ENCODE measurements at regions of chr1 and their contacts with region 1.

Region 1: GRCh38 chr1:198175423-198176170 is 18.8 kb downstream of the NEK7 start:
- DNase-seq: no peak
- ATAC-seq: peak; percentile 74
- H3K4me3 Mint-ChIP-seq: peak overlapping the region; percentile 53
- H3K27ac Mint-ChIP-seq: peak overlapping the region; percentile 74
- H3K4me1 Mint-ChIP-seq: peaks cover 83% of the 10 kb centered on the region
- H3K27me3 Mint-ChIP-seq: no peaks in the 10 kb centered on the region
- CTCF ChIP-seq: no peak

Region 2: DNA sequence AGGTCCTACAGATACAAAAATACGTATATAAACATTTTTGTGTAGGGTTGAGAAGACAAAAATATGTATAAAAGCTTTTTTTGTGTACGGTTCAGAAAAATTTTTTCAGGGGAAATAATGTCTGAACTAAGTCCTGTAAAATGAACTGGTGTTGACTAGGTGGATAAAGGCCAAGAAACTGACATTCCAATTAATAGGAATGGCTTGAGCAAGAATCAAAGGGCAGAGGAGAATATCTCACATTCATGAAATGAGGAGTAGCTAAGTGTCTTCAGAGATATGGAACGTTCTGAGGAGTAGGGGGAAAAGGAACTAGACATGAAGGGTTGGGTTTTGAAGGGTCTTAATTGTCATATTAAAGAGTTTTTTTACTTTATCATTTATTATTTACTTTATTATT is 631.5 kb before region 1 on chr1:
- CTCF ChIA-PET with region 1: no interaction called
- POLR2A ChIA-PET with region 1: no interaction called
- intact Hi-C with region 1: no loop called
- DNase-seq: no peak
- ATAC-seq: no peak
- H3K4me3 Mint-ChIP-seq: no peak overlapping the region
- H3K27ac Mint-ChIP-seq: no peak overlapping the region
- H3K4me1 Mint-ChIP-seq: no peaks in the 10 kb centered on the region
- H3K27me3 Mint-ChIP-seq: no peaks in the 10 kb centered on the region
- CTCF ChIP-seq: no peak

Region 3: DNA sequence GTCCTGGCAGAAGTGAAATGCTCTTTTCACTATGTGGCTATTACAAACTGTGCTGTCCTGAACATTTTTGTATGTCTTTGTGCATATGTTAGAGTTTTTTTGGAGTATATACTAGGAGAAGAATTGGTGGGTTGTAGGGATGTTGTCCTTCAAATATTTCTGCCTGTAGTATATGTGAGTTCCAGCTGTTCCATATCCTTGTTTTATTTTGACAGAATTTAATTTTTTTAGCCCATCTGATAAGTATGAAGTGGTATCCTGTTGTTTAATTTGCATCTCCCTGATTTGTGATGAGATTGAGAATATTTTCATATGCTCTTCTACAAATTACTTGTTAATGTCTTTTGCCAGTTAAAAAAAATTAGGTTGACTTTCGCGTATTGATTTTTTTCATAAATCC is 15.5 kb after region 1 on chr1:
- CTCF ChIA-PET with region 1: no interaction called
- POLR2A ChIA-PET with region 1: no interaction called
- intact Hi-C with region 1: loop called (anchors 2 kb)
- DNase-seq: no peak
- ATAC-seq: no peak
- H3K4me3 Mint-ChIP-seq: no peak overlapping the region
- H3K27ac Mint-ChIP-seq: no peak overlapping the region
- H3K4me1 Mint-ChIP-seq: peaks cover 61% of the 10 kb centered on the region
- H3K27me3 Mint-ChIP-seq: no peaks in the 10 kb centered on the region
- CTCF ChIP-seq: no peak

Measured in activated B cell treated with CpG ODN at 0.5 μM for 24 hours (primary cell).